BJ (cell line): ENCODE measurements at regions of chr11 and their contacts with region 1.

Region 1: DNA sequence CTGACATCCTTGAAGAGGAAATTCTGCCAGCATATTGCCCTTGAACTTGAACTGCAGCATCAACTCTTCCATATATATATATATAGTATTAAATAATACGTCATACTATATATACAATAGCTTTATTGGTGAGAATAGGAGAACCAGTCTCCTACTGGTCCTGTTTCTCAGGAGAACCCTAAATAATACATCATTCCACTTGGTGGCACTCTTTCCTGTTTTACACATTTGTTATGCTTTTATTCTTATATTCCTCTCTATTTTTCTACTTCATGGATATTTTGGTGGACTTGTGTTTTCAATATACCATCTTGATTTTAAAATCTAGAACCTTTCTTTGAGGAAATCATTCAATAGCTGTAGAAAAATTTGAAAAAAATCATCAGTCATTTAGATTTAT is 193.3 kb downstream of the TRPC6 start:
- DNase-seq: no peak
- H3K4me3 ChIP-seq: no peak overlapping the region
- H3K27me3 ChIP-seq: no peaks in the 10 kb centered on the region
- CTCF ChIP-seq: peak; percentile 28; the same call in 1 of the 2 replicates

Region 2: DNA sequence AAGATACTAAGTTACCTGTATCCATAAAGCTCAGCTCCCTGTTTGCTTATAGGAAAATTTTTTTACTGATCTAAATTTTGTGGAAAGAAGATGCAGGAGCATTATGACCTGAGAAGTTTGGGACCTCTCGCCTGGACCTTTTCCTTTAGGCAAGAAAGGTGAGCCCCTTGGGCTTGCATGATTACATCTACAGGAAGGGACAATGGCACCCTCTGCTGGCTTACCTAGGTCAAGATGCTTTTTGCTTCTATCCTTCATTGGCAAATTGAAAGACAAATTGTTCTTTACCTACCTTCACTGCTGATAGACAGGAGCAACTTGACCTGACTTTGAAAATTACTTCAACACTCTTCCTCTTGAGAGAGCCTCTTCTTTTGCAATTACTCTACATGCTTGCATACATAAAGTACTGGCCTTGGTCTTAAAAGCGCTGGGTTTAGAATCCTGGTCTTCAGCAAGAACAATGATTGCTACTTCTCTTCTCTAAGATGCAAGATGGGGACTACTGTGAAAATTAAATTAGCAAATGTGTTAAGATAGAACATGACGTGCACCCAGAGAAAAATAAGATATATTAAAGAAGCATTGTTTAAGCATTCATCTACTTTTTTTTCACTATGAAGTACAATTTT is 46.1 kb after region 1 on chr11:
- CTCF ChIA-PET with region 1: interaction called, 10 read pairs
- POLR2A ChIA-PET with region 1: no interaction called
- DNase-seq: no peak
- H3K4me3 ChIP-seq: no peak overlapping the region
- H3K27me3 ChIP-seq: peaks cover 2% of the 10 kb centered on the region; the same call in 1 of the 2 replicates
- CTCF ChIP-seq: peak; percentile 81

Region 3: DNA sequence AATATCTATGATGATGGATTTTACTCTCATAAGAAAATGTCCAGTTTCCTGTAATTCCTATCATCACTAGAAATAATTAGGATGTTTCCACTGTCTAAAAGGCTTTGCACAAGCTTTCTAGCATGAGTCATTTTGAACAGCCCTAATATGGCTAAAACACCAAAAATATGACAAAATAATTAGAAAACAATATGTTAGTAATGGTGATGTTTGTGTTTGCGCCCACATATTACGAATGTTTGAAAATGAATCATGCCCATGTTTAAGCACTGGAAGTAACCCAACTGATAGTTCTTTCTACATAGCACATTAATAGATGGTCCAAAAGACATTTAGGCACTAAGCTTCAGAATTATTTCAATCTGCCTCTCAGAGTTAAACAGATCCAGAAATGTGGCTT is 97.2 kb after region 1 on chr11:
- CTCF ChIA-PET with region 1: no interaction called
- POLR2A ChIA-PET with region 1: no interaction called
- DNase-seq: peak; percentile 76
- H3K4me3 ChIP-seq: no peak overlapping the region
- H3K27me3 ChIP-seq: no peaks in the 10 kb centered on the region
- CTCF ChIP-seq: no peak

Region 4: GRCh38 chr11:101668236-101668635 is 277.7 kb after region 1 on chr11:
- CTCF ChIA-PET with region 1: no interaction called
- POLR2A ChIA-PET with region 1: no interaction called
- DNase-seq: no peak
- H3K4me3 ChIP-seq: no peak overlapping the region
- H3K27me3 ChIP-seq: no peaks in the 10 kb centered on the region
- CTCF ChIP-seq: no peak